ENCODE measurements at regions of chr19 and their contacts with region 1.

Region 1: GRCh38 chr19:35495107-35496064 is 5.1 kb upstream of the KRTDAP start:
- DNase-seq: no peak
- H3K4me3 ChIP-seq: no peak overlapping the region
- H3K27ac ChIP-seq: peak overlapping the region; percentile 31
- H3K4me1 ChIP-seq: peaks cover 5% of the 10 kb centered on the region
- H3K27me3 ChIP-seq: no peaks in the 10 kb centered on the region
- CTCF ChIP-seq: peak; percentile 67 to 92 (median 78)
- POLR2A ChIP-seq: no peak

Region 2: DNA sequence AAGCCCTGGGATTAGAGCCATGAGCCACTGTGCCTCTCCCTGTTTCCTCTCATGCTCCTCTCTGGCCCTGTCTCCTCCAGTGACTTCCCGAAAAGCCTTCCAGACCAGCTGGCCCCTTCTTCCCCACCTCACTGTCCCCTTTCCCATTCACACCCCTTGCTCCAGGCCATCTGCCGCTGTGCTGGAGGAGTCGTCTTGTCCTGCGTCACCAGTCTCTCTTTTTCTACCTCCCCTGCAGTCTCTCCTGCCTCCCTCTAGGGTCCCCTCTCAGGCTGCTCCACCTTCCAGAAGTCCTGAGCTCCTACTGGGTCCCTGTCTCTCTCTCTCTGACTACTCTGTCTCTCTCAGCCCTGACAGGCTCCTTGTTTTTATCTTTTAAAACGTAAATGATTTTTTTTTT is 153.0 kb before region 1 on chr19:
- intact Hi-C with region 1: no loop called
- DNase-seq: no peak
- H3K4me3 ChIP-seq: no peak overlapping the region
- H3K27ac ChIP-seq: no peak overlapping the region
- H3K4me1 ChIP-seq: no peaks in the 10 kb centered on the region
- H3K27me3 ChIP-seq: no peaks in the 10 kb centered on the region
- CTCF ChIP-seq: no peak
- POLR2A ChIP-seq: no peak

Region 3: DNA sequence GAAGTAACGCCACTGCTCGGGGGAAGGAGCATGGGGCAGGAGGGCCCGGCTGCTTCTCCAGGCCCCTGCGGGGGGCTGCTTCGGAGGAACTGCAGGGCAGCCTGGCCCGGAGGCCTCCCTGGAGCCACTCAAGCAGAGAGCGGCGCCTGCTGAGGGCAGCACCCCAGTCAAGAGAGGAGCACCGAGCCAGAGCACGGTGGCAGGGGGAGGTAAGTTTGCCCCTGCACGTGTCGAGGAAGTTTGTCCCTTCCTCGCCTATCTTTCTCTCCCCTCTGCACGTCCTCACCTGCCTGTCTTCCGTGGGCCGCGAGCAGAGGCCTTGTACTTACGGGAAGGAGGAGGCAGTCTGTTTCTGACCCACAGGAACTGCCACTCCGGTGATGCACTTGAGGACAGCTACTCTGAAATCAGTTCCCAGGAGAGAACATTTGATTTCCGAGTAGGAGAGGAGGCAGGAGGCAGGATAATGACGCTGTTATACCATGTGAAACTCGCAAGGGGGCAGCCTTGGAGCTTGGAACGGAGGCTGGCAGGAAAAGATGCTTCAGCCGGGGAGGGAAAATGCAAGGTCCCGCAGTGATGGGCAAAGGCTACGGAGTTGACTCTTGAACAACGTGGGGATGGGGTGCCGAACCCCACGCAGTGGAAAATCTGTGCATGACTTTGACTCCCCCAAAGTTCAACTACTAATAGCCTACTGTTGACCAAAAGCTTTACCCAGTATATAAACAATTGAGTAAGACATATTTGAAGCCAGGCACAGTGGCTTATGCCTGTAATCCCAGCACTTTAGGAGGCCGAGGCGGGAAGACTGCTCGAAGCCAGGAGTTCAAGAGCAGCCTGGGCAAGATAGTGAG is 142.7 kb before region 1 on chr19:
- intact Hi-C with region 1: loop called (anchors 10 kb)
- DNase-seq: no peak
- H3K4me3 ChIP-seq: no peak overlapping the region
- H3K27ac ChIP-seq: no peak overlapping the region
- H3K4me1 ChIP-seq: no peaks in the 10 kb centered on the region
- H3K27me3 ChIP-seq: no peaks in the 10 kb centered on the region
- CTCF ChIP-seq: peak; percentile 35 to 69 (median 57)
- POLR2A ChIP-seq: no peak

Region 4: GRCh38 chr19:35457173-35457572 is 38.2 kb before region 1 on chr19:
- intact Hi-C with region 1: loop called (anchors 1 kb)
- DNase-seq: no peak
- H3K4me3 ChIP-seq: no peak overlapping the region
- H3K27ac ChIP-seq: no peak overlapping the region
- H3K4me1 ChIP-seq: peaks cover 8% of the 10 kb centered on the region
- H3K27me3 ChIP-seq: no peaks in the 10 kb centered on the region
- CTCF ChIP-seq: no peak
- POLR2A ChIP-seq: no peak